Sigmoid colon (tissue), 7 donors: ENCODE measurements at regions of chr11 and their contacts with region 1.

Region 1: DNA sequence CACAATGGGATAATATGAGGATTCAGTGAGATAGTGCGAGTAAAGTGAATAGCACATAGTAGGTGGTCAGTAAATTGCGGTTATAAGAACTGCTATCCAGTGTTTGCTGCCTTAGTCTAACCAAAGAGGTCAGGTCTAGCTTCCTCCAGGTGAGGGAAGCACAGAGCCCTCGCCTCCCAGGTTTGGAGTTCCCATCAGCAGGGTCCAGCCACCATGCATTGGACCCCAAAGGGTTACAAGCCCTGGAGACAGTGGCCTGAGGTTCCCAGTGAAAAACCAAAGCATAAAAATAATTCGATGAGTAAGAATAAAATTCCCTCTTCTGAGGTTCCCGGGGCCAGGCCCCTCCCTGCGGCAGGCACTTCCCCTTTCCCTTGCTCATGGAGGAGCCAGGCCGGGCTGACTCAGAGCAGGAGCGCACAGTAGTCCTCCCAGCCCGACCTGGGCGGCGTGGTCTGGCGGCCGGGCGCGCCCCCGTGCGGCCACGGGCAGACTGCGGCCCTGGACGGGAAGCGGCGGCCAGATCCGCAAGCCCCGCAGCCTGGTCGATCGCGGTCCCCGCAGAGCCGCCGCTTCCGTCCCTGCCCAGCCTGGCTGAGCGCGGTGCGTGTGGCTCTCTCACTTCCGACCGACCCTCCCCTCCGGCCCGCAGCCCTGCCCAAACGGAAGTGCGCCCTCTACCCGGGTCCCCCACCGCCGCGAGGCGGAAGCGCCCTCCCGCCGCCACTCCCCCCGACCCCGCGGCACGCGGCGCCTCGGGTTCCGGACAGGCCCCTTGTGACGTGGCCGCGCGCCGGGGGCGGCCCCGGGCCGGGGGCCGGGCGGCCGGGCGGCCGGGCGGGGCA is at the start of gene SLC39A13:
- DNase-seq: peak; percentile 98
- H3K4me3 ChIP-seq: peak within 1 kb of the TSS; percentile 61 to 85 (median 77)
- H3K27ac ChIP-seq: peak within 1 kb of the TSS; percentile 84 to 96 (median 95)
- H3K4me1 ChIP-seq: peaks cover 0 to 44% (median 29%) of the 10 kb centered on the region in 4 donors
- H3K27me3 ChIP-seq: no peaks in the 10 kb centered on the region
- CTCF ChIP-seq: peak; percentile 30 to 75 (median 63)
- EP300 ChIP-seq: peak in 1 of 4 donors; percentile 20
- POLR2A ChIP-seq: peak; percentile 57 to 58
- total RNA-seq, gene SLC39A13: 38.2 to 87.5 (median 54.0) TPM

Region 2: GRCh38 chr11:47186076-47186936 is 221.7 kb before region 1 on chr11 and contains the start of gene PACSIN3:
- intact Hi-C with region 1: loop called (anchors 5 kb)
- DNase-seq: peak; percentile 82
- H3K4me3 ChIP-seq: peak within 1 kb of the TSS; percentile 62 to 95 (median 75)
- H3K27ac ChIP-seq: peak within 1 kb of the TSS; percentile 88 to 99 (median 95)
- H3K4me1 ChIP-seq: peaks cover 0 to 72% (median 65%) of the 10 kb centered on the region in 4 donors
- H3K27me3 ChIP-seq: no peaks in the 10 kb centered on the region
- CTCF ChIP-seq: peak in 2 of 4 experiments; percentile 33 to 38
- EP300 ChIP-seq: no peak
- POLR2A ChIP-seq: peak in 1 of 2 donors; percentile 20
- total RNA-seq, gene PACSIN3: 56.0 to 78.3 (median 73.5) TPM

Region 3: GRCh38 chr11:47373876-47374720 is 33.9 kb before region 1 on chr11:
- intact Hi-C with region 1: loop called (anchors 2 kb)
- DNase-seq: peak; percentile 90
- H3K4me3 ChIP-seq: no peak overlapping the region
- H3K27ac ChIP-seq: no peak overlapping the region
- H3K4me1 ChIP-seq: peaks cover 0 to 6% (median 0%) of the 10 kb centered on the region in 4 donors
- H3K27me3 ChIP-seq: no peaks in the 10 kb centered on the region
- CTCF ChIP-seq: peak; percentile 78 to 94 (median 90)
- EP300 ChIP-seq: no peak
- POLR2A ChIP-seq: no peak

Region 4: DNA sequence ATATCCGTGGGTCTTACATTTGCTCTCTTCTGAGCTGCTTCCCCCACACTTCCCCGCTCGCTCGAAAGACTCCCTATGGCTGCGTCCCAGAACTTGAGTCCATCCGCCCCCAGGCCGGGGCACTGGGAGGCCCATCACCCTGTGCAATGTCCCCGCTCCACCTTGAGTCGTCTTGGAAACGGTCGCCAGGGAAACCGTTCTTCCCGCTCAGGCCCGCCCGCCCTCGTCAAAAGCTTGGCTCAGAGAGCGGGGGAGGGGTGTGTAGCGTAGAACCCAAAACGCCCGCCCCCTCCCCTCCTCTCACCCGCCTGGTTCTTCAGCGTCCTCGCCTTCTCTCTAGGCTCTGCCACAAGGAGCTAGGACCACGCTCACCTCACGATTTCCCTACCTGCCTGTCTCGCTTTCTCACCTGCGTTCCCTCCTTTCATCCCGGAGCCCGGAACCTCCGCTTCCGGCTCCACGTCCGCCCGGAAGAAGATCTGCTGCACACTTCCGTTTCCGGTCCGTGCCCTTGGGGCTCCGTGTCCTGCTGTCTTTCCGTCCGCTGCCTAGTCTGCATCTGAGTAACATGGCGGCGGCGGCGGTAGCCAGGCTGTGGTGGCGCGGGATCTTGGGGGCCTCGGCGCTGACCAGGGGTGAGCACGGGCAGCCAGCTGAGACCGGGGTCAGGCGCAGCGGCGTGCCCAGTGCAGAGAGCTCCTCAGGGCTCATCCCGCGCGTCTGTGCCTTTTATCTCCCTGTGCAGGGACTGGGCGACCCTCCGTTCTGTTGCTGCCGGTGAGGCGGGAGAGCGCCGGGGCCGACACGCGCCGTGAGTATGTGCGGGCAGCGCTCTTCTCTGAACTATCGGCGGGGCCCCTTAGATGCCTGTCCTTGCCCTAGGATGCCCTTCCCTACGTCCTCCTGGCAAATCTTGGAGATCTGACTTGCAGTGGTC is 170.8 kb after region 1 on chr11 and contains the starts of genes KBTBD4 and NDUFS3:
- intact Hi-C with region 1: loop called (anchors 5 kb)
- DNase-seq: peak; percentile 95
- H3K4me3 ChIP-seq: peak within 1 kb of the TSS; percentile 93 to 97 (median 94)
- H3K27ac ChIP-seq: peak within 1 kb of the TSS; percentile 87 to 90 (median 88)
- H3K4me1 ChIP-seq: peaks cover 0 to 34% (median 26%) of the 10 kb centered on the region in 4 donors
- H3K27me3 ChIP-seq: no peaks in the 10 kb centered on the region
- CTCF ChIP-seq: no peak
- EP300 ChIP-seq: peak in 1 of 4 donors; percentile 19
- POLR2A ChIP-seq: peak; percentile 68 to 71
- total RNA-seq, gene KBTBD4: 13.3 to 29.9 (median 23.5) TPM
- total RNA-seq, gene NDUFS3: 74.4 to 106 (median 91.7) TPM

Region 5: DNA sequence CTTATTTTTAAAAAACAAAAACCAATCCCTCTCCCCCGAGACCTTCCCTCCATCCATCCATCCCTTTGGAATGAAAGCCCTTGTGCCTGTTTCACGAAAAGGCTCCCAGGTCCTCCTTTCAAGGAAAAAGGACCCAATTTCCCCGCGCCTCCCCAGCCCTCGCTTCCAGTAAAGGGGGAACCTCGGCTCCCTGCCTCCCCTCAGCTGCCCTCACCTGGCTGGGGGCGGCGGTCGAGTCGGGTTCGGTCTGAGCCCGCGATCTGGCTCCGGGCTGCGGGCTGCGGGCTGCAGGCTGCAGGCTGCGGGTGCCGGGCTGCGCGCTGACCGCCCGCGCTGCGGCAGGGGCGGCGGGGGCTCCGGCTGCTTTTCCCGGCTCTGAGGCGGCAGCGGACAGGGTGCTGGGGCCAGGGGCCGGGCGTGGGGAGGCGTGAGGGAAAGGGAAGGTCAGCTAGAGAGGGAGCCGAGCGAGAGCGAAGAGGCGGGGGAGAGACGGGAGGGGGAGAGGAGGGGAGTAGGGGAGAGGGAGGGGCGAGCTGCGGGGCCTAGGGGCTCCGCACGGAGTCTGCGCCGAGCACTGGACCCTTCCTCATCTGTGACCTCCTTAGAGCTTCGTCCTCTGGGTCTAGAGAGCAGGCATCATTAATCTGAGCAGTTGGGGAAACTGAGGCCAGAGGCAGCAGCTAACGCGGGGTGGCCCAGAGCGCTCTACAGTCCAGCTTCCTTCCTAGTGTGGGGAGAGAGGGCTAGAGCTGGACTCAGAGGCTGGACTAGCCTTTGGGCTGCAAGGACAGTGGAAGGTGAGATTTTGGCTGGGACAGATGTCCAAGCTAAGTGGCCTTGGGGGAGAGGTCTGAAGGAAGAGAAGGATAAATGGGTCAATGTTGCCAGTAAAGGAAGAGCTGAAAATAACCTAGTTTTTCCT is 186.2 kb after region 1 on chr11 and contains the start of gene C1QTNF4:
- intact Hi-C with region 1: no loop called
- DNase-seq: no peak
- H3K4me3 ChIP-seq: peak within 1 kb of the TSS in 3 of 4 donors; percentile 25 to 30 (median 29)
- H3K27ac ChIP-seq: no peak within 1 kb of the TSS
- H3K4me1 ChIP-seq: peaks cover 0 to 26% (median 17%) of the 10 kb centered on the region in 4 donors
- H3K27me3 ChIP-seq: peaks cover 15 to 58% (median 50%) of the 10 kb centered on the region in 3 donors
- CTCF ChIP-seq: no peak
- EP300 ChIP-seq: no peak
- POLR2A ChIP-seq: no peak
- total RNA-seq, gene C1QTNF4: 6.1 to 15.5 (median 6.5) TPM

Region 6: DNA sequence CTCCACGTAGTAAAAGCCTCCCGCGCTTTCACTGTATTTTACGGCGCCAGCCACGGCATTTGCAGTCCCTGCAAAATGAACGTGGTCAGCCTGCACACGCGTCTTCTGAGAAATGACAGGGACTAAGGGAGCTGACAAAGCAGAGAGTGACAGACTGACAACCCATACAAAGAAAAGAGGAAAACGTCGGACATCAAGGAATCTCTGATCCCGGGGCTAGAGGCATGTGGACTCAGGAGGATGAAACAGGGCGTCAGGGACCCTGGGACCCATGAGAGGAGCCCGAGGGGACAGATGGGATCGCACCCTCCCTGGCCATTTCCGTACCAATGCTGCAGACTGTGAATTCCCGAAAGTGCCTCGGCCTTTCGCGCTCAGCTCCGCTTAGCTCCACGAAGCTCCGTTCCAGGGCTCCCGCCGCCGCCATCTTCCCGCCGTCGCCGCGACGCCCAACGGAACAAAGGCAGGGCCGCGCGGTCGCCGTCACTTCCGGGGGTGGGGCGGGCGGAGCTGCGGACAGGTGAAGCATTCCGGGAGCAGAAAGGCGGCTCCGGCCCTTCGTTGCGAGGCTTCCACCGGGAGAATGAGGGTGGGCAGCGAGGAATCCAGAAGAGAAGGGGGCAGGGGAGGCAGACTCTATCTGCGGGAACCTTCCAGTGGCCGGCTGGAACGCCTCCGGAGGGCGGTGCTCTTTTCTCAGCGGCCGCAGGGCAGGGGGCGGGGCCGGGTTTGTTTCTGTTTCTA is 440.1 kb after region 1 on chr11 and contains the start of gene NUP160:
- intact Hi-C with region 1: loop called (anchors 5 kb)
- DNase-seq: peak; percentile 90
- H3K4me3 ChIP-seq: peak within 1 kb of the TSS; percentile 68 to 93 (median 82)
- H3K27ac ChIP-seq: peak within 1 kb of the TSS; percentile 82 to 95 (median 90)
- H3K4me1 ChIP-seq: peaks cover 0 to 29% (median 14%) of the 10 kb centered on the region in 4 donors
- H3K27me3 ChIP-seq: no peaks in the 10 kb centered on the region
- CTCF ChIP-seq: no peak
- EP300 ChIP-seq: no peak
- POLR2A ChIP-seq: peak; percentile 45 to 66
- total RNA-seq, gene NUP160: 15.7 to 23.2 (median 20.8) TPM